Upper lobe of right lung (tissue), 1 donor: ENCODE measurements at regions of chr2 and their contacts with region 1.

Region 1: DNA sequence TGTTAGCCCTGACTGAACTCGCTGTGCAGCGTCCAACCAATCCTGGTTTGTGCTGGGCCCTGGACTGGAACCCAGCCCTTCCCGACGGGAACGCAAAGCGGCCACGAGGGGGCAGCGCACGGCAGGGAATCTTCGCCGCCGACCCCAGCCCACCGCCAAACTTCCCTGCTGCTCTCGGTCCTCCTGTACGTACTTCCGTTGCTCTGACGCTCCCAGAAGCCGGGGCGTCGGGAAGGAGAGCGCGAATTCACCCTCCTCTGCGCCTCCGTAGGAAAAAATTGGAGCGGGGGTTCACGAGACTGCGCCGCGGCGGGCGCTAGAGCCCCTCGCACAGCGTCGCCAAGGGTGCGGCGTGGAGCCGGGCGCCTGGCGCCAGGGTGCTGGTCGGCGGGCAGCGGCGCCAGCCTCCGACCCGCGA is 948 bp upstream of the SH3RF3 start:
- DNase-seq: peak; percentile 87
- ATAC-seq: peak; percentile 87
- H3K4me3 ChIP-seq: peak overlapping the region; percentile 67
- H3K27ac ChIP-seq: peak overlapping the region; percentile 86
- H3K4me1 ChIP-seq: peaks cover 6% of the 10 kb centered on the region
- H3K27me3 ChIP-seq: peaks cover 12% of the 10 kb centered on the region
- CTCF ChIP-seq: peak; percentile 88

Region 2: GRCh38 chr2:109260886-109261700 is 133.0 kb after region 1 on chr2:
- intact Hi-C with region 1: loop called (anchors 10 kb)
- DNase-seq: peak; percentile 52
- ATAC-seq: peak; percentile 75
- H3K4me3 ChIP-seq: no peak overlapping the region
- H3K27ac ChIP-seq: no peak overlapping the region
- H3K4me1 ChIP-seq: peaks cover 53% of the 10 kb centered on the region
- H3K27me3 ChIP-seq: no peaks in the 10 kb centered on the region
- CTCF ChIP-seq: peak; percentile 36

Region 3: DNA sequence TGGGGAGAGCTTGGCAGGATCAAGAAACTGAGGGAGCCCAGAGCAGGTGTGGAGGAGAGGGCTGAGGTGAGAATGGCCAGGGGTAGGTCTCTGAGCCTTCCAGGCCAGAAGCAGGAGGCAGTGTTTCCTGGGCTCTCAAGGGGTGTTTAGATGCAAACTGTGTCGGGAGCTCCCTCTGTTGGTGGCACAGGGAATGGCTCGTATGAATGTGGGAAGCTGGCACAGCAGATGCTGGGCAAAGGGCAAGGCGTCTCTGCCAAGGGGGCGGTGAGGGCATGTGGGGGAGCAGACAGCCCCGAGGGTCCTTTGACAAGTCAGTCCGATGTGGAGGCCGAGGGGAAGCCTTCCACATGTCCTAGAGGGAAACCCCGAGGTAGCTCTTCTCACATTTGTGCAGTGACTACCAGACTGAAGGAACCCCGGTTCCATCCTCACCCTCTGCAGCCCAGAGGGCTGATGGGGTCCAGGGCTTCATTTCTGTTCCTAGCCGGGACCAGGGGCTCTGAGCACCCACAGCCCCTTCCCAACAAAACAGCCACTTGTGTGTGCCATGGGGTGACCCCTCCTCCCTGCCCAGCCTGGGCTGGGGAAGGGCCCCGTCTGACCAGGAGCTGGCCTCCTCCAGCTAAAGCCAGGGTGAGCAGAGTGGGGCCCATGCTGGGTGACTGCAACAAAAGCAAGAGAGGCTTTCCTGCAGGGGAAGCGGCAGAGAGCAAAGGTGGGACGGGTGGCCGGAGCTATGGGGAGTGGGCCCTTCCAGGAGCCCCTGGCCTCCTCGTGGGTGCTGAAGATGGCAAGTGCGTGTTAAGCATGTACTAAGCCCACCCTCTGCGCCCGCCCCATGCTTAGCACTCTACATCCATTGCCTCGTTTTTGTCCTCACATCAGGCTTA is 382.3 kb after region 1 on chr2:
- intact Hi-C with region 1: loop called (anchors 5 kb)
- DNase-seq: peak; percentile 83
- ATAC-seq: peak; percentile 87
- H3K4me3 ChIP-seq: no peak overlapping the region
- H3K27ac ChIP-seq: no peak overlapping the region
- H3K4me1 ChIP-seq: no peaks in the 10 kb centered on the region
- H3K27me3 ChIP-seq: no peaks in the 10 kb centered on the region
- CTCF ChIP-seq: peak; percentile 93